AG04450 (cell line): ENCODE measurements at regions of chr2 and their contacts with region 1.

Region 1: DNA sequence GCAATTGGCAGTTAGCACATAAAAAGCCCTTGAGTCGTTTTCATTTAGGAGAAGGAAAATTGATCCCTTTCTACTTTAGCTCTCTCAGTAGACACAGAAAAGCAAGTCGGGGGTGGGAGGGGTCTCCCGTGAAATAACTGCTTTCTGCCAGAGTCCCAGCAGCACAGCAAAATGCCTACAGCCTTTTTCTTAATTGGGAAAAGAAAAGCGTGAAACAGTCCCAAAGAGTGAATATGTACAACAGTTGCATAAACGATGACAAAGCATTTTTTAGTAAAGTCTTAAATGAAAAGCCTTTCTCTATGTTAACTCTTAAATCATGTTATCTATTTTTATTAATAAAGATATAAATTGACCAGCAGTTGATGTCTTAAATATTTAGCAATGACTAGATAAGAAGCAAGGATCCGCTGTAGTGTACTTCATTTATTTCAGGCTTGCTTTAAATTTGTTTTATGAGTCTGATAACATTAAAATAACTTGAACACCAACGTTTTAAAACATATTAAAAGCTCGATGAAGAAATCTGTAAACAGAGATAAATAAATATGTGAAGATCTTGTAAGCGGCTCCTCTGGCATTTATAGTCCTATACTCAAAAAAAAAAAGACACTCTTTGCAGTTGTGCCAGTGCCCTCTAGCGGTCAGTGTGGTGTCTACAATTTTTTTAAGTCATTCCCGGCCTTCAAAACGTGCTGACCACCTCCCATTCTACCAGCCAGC is 42.3 kb upstream of the ATIC start:
- DNase-seq: peak; percentile 64
- H3K4me3 ChIP-seq: no peak overlapping the region
- H3K27ac ChIP-seq: no peak overlapping the region
- H3K27me3 ChIP-seq: no peaks in the 10 kb centered on the region
- CTCF ChIP-seq: peak; percentile 81

Region 2: GRCh38 chr2:214808981-214809750 is 460.4 kb before region 1 on chr2 and contains the start of gene BARD1:
- CTCF ChIA-PET with region 1: interaction called, 11 read pairs
- POLR2A ChIA-PET with region 1: no interaction called
- DNase-seq: peak; percentile 10
- H3K4me3 ChIP-seq: peak within 1 kb of the TSS; percentile 85
- H3K27ac ChIP-seq: peak within 1 kb of the TSS; percentile 76
- H3K27me3 ChIP-seq: no peaks in the 10 kb centered on the region
- CTCF ChIP-seq: no peak
- polyA plus RNA-seq, gene BARD1: 3.9 and 4.2 TPM in 2 replicates

Region 3: DNA sequence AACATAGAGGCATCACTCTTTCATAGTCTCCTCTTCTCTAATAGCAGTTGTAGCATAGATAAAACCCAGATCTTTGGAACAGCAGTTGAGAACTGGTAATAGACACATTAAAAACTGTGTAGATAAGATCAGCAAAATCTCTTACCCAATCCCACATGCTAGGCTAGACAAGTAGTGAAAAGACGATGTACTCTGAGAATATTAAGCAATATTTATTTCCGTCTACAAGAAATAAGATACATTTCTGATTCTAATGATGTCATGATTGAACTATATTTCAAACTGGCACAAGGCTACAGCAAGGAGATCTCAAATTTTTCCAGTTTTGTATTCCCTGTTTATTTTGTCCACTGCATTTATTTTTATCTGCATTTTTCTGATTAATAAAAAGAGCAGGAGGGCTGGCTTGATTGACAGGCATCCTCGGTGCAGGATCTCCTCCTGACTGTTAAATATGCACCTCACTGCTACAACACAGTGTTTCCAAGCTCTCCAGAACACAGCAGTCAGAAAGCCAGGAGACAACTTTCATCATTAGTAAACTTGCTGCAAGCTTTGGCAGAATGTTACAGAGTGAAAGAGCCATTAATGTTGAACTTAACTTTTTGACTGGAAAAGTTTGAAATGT is 31.0 kb before region 1 on chr2:
- CTCF ChIA-PET with region 1: interaction called, 17 read pairs
- POLR2A ChIA-PET with region 1: no interaction called
- DNase-seq: no peak
- H3K4me3 ChIP-seq: no peak overlapping the region
- H3K27ac ChIP-seq: no peak overlapping the region
- H3K27me3 ChIP-seq: no peaks in the 10 kb centered on the region
- CTCF ChIP-seq: no peak

Region 4: DNA sequence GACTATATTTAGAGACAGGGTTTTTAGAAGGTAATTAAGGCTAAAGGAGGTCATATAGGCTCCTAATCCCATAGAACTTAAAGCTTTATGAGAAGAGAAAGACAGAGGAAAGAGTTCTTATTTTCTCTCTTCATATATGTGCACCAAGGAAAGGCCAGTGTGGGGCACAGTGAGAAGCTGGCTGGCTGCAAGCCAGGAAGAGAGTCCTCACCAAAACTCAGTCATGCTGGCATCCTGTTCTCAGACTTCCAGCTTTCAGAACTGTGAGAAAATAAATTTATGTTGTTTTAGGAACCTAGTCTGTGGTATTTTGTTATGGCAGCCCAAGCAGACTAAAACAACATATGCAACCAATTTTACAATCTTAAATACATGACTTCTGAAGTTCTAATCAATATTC is 10.8 kb after region 1 on chr2:
- CTCF ChIA-PET with region 1: interaction called, 17 read pairs
- POLR2A ChIA-PET with region 1: no interaction called
- DNase-seq: no peak
- H3K4me3 ChIP-seq: no peak overlapping the region
- H3K27ac ChIP-seq: no peak overlapping the region
- H3K27me3 ChIP-seq: no peaks in the 10 kb centered on the region
- CTCF ChIP-seq: no peak